Activated naive CD4-positive, alpha-beta T cell treated with anti-CD3 and anti-CD28 coated beads for 36 hours (primary cell): ENCODE measurements at regions of chr10 and their contacts with region 1.

Region 1: GRCh38 chr10:102503281-102504220 is at the start of gene SUFU:
- DNase-seq: peak; percentile 99
- H3K4me3 Mint-ChIP-seq: peak within 1 kb of the TSS; percentile 94
- H3K27ac Mint-ChIP-seq: peak within 1 kb of the TSS; percentile 54
- H3K4me1 Mint-ChIP-seq: peaks cover 24% of the 10 kb centered on the region
- H3K27me3 Mint-ChIP-seq: no peaks in the 10 kb centered on the region
- total RNA-seq, gene SUFU: 6.6 to 7.1 TPM

Region 2: GRCh38 chr10:101353692-101354327 is 1149.7 kb before region 1 on chr10 and contains the start of gene BTRC:
- CTCF ChIA-PET with region 1: no interaction called
- intact Hi-C with region 1: loop called (anchors 2 kb)
- DNase-seq: peak; percentile 98
- H3K4me3 Mint-ChIP-seq: peak within 1 kb of the TSS; percentile 92
- H3K27ac Mint-ChIP-seq: peak within 1 kb of the TSS; percentile 95
- H3K4me1 Mint-ChIP-seq: peaks cover 30% of the 10 kb centered on the region
- H3K27me3 Mint-ChIP-seq: peaks cover 2% of the 10 kb centered on the region
- total RNA-seq, gene BTRC: 10.9 to 12.7 TPM

Region 3: GRCh38 chr10:101478956-101479355 is 1024.6 kb before region 1 on chr10:
- CTCF ChIA-PET with region 1: no interaction called
- intact Hi-C with region 1: no loop called
- DNase-seq: no peak
- H3K4me3 Mint-ChIP-seq: no peak overlapping the region
- H3K27ac Mint-ChIP-seq: no peak overlapping the region
- H3K4me1 Mint-ChIP-seq: no peaks in the 10 kb centered on the region
- H3K27me3 Mint-ChIP-seq: no peaks in the 10 kb centered on the region

Region 4: DNA sequence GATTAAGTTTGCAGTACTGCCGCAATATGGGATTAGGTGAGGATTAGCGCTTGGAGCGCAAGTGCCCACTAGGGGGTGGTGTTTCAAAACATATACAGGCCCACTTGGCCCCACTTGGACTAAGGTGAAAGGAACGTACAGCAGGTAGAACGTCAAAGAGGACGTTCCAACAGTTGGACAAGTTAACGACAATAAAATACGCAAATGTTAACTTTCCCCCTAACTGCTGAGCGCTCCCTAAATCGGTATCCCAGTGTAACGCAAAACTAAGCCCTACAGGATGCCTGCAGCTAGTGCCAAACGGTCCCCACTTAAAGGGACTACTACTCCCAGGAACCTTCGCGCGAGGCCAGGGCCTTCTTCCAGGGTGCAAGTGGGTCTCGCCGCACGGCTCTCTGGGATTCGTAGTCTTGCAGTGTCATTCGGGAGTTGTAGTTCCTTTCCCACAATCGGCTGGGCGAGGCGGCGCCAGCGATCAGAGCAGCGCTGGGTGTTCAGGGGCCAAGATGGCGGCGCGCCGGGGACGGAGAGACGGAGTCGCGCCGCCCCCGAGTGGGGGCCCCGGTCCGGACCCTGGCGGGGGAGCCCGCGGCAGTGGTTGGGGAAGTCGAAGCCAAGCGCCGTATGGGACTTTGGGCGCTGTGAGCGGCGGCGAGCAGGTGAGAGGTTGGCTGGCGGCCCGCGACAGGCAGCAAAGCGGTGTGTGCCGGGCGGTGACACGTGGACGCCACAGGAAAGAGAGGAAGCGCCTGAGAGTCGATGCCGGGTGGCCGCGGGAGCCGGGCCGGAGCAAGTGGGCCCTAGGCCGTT is 370.8 kb before region 1 on chr10 and contains the start of gene PPRC1:
- CTCF ChIA-PET with region 1: no interaction called
- intact Hi-C with region 1: loop called (anchors 1 kb)
- DNase-seq: peak; percentile 99
- H3K4me3 Mint-ChIP-seq: peak within 1 kb of the TSS; percentile 97
- H3K27ac Mint-ChIP-seq: peak within 1 kb of the TSS; percentile 96
- H3K4me1 Mint-ChIP-seq: peaks cover 42% of the 10 kb centered on the region
- H3K27me3 Mint-ChIP-seq: no peaks in the 10 kb centered on the region
- total RNA-seq, gene PPRC1: 54.6 to 55.0 TPM

Region 5: DNA sequence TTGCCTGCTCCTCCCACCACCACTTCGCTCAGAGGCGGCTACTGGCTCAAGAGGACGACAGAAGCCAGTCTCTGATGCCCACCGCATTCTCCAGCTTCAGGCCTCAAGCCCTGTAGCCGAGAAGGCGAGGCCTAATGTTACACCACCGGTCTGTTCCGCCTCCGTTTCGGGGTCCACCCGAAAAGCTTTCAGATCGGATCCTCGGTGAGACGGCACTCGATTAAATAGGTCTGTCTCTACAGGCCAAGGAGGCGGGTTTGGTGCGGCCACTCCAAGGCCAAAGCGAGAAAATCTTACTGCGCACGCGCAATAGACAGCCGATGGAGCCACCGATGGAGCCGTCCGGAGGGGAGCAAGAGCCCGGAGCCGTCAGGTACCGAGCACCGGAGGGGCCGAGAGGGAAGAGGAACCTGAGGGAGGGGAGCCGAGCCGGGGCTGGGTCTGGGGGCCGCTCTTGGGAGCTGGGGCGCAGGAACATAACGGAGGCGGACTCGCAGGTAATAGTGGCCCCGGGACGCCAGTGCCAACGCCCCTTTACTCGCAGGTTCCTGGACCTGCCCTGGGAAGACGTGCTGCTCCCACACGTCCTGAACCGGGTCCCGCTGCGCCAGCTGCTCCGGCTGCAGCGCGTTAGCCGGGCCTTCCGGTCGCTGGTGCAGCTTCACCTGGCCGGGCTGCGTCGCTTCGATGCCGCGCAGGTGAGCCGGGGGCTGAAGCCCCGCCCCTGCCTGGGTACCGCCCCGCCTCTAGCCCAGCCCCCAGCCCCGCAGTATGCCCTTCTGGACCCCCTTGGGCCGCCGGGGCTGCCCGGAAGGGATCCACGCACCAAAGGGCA is 82.5 kb before region 1 on chr10 and contains the start of gene FBXL15:
- CTCF ChIA-PET with region 1: no interaction called
- intact Hi-C with region 1: loop called (anchors 1 kb)
- DNase-seq: peak; percentile 98
- H3K4me3 Mint-ChIP-seq: peak within 1 kb of the TSS; percentile 95
- H3K27ac Mint-ChIP-seq: peak within 1 kb of the TSS; percentile 91
- H3K4me1 Mint-ChIP-seq: peaks cover 30% of the 10 kb centered on the region
- H3K27me3 Mint-ChIP-seq: peaks cover 20% of the 10 kb centered on the region
- total RNA-seq, gene FBXL15: 9.9 to 10.8 TPM

Region 6: DNA sequence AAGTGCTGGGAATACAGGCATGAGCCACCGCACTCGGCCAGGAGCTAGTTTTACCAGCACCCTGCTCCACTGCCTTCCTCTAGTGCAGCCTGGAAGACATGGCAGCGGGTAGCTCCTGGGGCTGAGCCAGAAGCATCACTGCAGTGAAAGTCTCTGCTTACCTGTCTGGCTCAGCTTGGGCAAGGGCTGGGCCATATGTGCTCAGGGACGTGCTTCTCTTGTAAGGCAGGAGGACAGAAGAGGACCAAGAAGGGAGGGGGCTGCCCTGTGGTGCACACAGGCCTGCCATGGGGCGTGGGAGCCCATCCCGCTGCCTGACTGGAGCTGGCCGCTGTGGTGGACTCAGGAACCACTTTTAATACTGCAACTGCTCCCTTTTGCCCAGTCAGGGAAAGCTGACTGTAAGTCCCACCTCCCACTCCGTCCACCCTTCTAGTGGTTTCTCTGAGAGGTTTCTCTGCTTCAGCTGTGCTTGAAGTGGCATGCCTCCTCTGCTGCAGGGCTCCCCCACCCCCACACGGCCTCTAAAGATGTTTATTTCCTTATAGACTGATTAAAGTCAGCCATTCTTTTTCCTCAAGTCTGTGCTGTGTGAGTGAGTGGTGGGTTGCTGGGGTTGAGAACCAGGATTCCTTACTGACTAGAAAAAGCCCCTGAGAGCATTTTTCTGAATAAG is 26.9 kb before region 1 on chr10:
- CTCF ChIA-PET with region 1: interaction called, 12 read pairs
- intact Hi-C with region 1: no loop called
- DNase-seq: no peak
- H3K4me3 Mint-ChIP-seq: no peak overlapping the region
- H3K27ac Mint-ChIP-seq: peak overlapping the region; percentile 31
- H3K4me1 Mint-ChIP-seq: peaks cover 43% of the 10 kb centered on the region
- H3K27me3 Mint-ChIP-seq: no peaks in the 10 kb centered on the region

Region 7: DNA sequence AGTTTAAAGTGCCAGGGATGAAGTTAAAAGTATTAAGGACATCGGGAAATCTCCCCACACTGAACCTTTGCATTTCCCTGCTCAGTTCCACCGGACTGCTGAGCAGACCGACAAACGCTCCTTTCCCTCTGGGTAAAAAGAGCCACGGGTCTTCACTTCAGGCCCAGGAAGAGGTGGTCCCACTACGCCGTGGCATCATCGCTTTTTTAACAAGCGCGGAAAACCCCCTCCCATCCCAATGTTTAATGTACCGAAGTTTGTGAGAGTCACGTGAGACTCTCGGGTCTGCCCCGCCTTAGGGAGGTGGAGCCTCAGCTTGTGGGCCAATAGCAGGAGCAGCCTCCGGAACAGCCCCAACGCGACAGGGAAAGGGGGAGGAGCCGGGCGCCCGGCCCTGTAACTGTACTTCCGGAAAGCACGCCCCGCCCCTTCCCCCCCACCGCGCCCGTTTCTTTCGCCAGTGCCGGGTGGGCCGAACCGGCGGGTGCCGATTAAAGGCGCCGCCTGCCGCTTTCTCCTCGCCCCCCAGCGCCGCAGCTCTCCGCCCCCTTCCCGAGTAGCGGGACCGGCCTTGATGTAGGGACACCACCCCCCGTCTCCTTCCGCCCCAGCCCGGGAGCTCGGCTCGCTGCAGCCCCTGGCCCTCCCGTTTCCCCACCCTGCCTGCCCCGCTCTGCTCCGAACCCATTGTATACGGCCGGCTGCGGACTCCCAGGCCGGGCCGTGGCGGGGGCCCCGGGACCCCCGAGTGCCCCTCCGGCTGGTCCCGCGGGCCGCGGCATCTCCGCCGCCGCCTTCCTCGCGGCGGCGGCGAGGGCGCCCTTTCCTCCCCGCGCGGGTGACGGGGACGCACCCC is 138.6 kb after region 1 on chr10:
- CTCF ChIA-PET with region 1: interaction called, 3 read pairs
- intact Hi-C with region 1: loop called (anchors 1 kb)
- DNase-seq: peak; percentile 99
- H3K4me3 Mint-ChIP-seq: peak overlapping the region; percentile 83
- H3K27ac Mint-ChIP-seq: peak overlapping the region; percentile 88
- H3K4me1 Mint-ChIP-seq: peaks cover 18% of the 10 kb centered on the region
- H3K27me3 Mint-ChIP-seq: no peaks in the 10 kb centered on the region

Region 8: DNA sequence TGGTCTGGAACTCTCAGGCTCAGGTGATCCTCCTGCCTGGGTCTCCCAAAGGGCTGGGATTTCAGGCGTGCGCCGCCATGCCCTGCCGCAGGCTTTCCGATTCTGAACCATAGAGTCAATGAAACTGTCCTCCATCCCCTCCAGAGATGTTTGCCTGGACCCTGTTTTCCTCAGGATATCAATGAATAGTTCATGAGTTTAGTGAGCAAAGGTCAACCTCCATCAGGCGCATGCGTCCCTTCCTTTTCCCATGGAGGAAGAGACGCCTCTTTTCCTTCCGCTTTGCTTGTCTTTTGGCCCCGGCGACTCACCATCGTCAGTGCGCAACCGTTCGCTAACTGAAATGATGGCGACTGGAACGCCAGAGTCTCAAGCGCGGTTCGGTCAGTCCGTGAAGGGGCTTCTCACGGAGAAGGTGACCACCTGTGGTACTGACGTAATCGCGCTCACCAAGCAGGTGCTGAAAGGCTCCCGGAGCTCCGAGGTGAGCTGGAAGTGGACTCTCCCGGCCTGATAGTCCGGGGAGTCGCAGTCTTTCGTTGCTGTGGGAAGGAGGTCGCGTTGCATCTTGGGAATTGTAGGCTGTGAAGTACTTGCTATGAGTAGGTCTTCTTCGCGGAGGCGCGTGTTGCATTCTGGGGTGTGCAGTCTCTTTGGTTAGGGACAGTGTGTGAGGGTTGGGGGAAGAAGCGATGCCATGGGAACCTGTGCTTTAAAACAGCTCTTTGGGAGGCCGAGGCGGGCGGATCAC is 350.6 kb after region 1 on chr10 and contains the start of gene BORCS7:
- CTCF ChIA-PET with region 1: no interaction called
- intact Hi-C with region 1: loop called (anchors 1 kb)
- DNase-seq: peak; percentile 95
- H3K4me3 Mint-ChIP-seq: peak within 1 kb of the TSS; percentile 95
- H3K27ac Mint-ChIP-seq: peak within 1 kb of the TSS; percentile 97
- H3K4me1 Mint-ChIP-seq: peaks cover 17% of the 10 kb centered on the region
- H3K27me3 Mint-ChIP-seq: no peaks in the 10 kb centered on the region
- total RNA-seq, gene BORCS7: 5.6 to 5.8 TPM